Ascending aorta (tissue), 2 donors: ENCODE measurements at regions of chr5 and their contacts with region 1.

Region 1: DNA sequence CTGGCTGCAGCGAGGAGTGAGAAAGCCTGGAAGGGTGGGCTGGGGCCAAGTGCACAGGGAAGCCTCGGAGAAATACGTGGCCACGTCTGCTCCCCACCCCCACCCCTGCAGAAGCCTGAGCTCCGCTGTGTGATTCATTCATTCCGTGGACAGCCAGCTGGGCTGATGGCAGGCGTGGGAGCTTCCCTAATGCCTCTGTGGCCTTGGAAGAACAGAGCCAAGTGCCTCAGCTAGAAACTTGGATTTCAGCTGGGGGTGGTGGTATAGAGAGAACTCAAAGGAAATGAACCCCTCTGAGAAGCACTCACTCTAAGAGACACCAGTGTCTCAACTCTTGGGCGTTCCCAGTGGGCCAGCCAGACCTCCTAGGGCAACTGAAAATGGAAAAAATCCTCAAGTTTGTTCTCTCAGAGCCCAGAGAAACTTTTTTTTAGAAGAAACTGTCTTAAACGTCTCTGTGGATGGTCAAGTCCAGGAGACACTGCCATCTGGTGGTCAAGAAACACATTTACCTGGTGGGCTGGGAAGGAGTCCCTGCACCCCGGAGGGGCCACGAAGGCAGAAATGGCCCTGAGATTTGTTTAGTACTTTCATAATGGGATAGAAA is 18.0 kb downstream of the ATOX1 start:
- DNase-seq: peak in 1 of 2 donors; percentile 87
- H3K4me3 ChIP-seq: peak overlapping the region in 1 of 2 donors; percentile 9
- H3K27ac ChIP-seq: peak overlapping the region; percentile 86 to 89
- H3K4me1 ChIP-seq: peaks cover 4 to 33% of the 10 kb centered on the region in 2 donors
- H3K27me3 ChIP-seq: no peaks in the 10 kb centered on the region
- CTCF ChIP-seq: peak; percentile 82 to 94 (median 92)

Region 2: DNA sequence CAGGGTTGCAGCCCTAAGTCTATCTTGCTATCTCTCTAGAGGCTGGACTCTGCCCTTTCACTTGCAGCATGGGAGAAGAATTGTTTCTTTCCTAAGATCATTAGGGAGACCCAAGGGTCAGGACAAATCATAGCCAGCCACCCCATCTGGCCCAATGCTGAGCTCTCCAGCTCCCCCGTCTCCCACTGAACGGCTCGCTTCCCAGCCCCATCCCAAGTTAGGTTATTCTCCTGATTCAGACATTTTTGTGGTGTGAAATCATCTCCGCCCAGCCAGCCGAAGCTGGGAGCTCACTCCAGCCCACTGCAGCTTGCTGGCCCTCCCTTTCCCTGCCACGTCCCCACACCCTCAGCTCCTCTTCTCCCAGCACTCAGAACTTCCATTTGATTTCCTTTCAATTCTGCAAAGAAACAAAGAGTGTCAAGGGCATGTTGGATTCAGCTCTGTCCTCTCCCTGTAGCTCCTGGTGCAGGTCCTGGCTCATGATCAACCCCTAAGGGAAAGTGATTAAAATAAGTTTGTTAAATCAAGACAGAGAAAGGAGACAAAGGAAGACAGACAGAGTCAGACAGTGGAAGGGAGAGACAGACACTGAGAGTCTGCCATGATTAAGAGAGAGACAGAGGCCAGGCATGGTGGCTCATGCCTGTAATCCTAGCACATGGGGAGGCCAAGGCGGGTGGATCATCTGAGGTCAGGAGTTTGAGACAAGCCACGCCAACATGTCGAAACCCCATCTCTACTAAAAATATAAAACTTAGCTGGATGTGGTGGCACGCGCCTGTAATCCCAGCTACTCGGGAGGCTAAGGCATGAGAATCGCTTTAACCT is 41.2 kb before region 1 on chr5:
- intact Hi-C with region 1: loop called (anchors 2 kb)
- DNase-seq: peak; percentile 37 to 91
- H3K4me3 ChIP-seq: peak overlapping the region in 1 of 2 donors; percentile 25
- H3K27ac ChIP-seq: peak overlapping the region; percentile 91 to 98
- H3K4me1 ChIP-seq: peaks cover 0 to 44% of the 10 kb centered on the region in 2 donors
- H3K27me3 ChIP-seq: no peaks in the 10 kb centered on the region
- CTCF ChIP-seq: no peak

Region 3: DNA sequence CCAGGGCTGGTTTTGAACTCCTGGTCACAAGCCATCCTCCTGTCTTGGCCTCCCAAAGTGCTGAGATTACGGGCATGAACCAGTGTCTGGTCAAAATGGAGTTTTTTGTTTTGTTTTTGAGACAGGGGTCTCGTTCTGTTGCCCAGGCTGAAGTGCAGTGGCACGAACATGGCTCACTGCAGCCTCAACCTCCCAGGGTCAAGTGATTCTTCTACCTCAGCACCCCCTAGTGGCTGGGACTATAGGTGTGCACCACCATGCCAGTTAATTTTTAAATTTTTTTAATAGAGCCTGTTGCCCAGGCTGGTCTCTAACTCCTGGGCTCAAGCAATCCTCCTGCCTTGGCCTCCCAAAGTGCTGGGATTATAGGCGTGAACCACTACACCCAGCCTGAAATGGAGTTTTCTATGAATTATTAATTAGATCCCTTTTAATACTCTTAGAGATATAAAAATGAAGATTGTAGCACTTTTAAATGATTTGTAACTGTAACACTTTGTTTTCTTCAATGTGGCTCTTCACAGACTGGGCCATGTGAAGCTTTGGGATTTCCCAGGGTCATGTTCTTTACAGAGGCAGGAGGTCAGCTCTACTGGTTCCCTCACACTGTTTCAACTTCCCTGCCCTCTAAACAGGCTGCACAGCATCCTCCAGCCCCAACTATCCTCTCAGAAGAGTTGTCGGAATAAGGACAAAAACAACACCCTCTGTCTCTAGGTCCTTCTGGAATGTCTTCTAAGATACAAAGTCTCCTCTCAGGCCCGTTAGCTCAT is 21.0 kb before region 1 on chr5:
- intact Hi-C with region 1: loop called (anchors 1 kb)
- DNase-seq: peak in 1 of 2 donors; percentile 71
- H3K4me3 ChIP-seq: no peak overlapping the region
- H3K27ac ChIP-seq: peak overlapping the region; percentile 71 to 86
- H3K4me1 ChIP-seq: peaks cover 9 to 26% of the 10 kb centered on the region in 2 donors
- H3K27me3 ChIP-seq: no peaks in the 10 kb centered on the region
- CTCF ChIP-seq: peak; percentile 48 to 57 (median 57)